Heart left ventricle (tissue), 16 donors: ENCODE measurements at regions of chr19 and their contacts with region 1.

Region 1: GRCh38 chr19:49766007-49766937 is 529 bp upstream of the AP2A1 start:
- DNase-seq: peak; percentile 99 to 100 (median 100)
- ATAC-seq: peak; percentile 90 to 96 (median 95)
- H3K4me3 ChIP-seq: peak overlapping the region in 11 of 12 donors; percentile 46 to 97 (median 84)
- H3K27ac ChIP-seq: peak overlapping the region; percentile 90 to 99 (median 94)
- H3K4me1 ChIP-seq: peaks cover 0 to 39% (median 29%) of the 10 kb centered on the region in 12 donors
- H3K27me3 ChIP-seq: no peaks in the 10 kb centered on the region
- CTCF ChIP-seq: peak in 2 of 12 donors; percentile 14 to 18
- POLR2A ChIP-seq: peak in 1 of 2 donors; percentile 92

Region 2: DNA sequence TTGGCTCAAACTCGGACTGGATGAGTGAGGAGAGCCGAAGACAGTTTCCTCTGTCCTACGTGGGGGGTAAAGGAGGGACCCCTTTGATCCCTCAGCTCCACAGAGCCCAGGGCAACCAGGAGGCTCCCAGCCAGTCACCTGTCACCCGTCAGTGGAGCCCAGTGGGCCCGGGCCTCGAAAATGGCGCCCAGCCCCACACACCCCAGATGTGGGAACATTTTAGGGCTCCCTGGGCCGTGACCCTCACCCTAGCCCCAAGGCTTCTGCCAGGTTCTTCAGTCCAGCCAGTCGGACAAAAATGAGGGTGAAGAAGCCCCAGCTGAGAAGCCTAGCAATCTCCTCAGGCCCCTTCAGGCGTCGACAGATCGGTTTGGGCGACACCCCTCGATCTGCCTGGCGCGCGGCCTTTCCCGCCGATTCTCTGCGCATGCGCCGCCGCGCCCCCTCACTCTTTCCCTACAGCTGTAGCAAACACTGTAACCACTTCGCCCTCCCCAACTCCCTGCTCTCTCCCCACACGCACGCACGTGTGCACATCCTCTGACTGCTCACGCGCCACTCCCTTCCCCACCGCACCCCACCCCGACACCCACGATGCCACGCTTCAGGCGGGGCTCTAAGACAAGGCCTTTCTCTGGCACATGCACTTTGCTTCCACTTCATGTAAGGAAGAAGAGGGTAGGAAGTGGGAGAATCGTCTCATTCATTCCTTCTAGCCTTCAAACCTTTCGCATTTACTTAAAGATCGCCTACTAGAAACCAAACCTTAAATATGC is 441.3 kb before region 1 on chr19 and contains the start of gene SLC6A16:
- intact Hi-C with region 1: no loop called
- DNase-seq: no peak
- ATAC-seq: peak in 2 of 4 donors; percentile 7 to 45
- H3K4me3 ChIP-seq: no peak within 1 kb of the TSS
- H3K27ac ChIP-seq: no peak within 1 kb of the TSS
- H3K4me1 ChIP-seq: peaks cover 0 to 14% (median 0%) of the 10 kb centered on the region in 12 donors
- H3K27me3 ChIP-seq: no peaks in the 10 kb centered on the region
- CTCF ChIP-seq: no peak
- POLR2A ChIP-seq: no peak
- total RNA-seq, gene SLC6A16: 0.27 to 1.3 (median 0.40) TPM

Region 3: GRCh38 chr19:49690656-49691242 is 75.5 kb before region 1 on chr19 and contains the start of gene CPT1C:
- intact Hi-C with region 1: loop called in 2 of 10 experiments (anchors 5 kb)
- DNase-seq: peak; percentile 80 to 86 (median 83)
- ATAC-seq: peak; percentile 54 to 85 (median 75)
- H3K4me3 ChIP-seq: peak within 1 kb of the TSS; percentile 25 to 71 (median 58)
- H3K27ac ChIP-seq: peak within 1 kb of the TSS; percentile 20 to 85 (median 64)
- H3K4me1 ChIP-seq: peaks cover 0 to 50% (median 30%) of the 10 kb centered on the region in 12 donors
- H3K27me3 ChIP-seq: peaks cover 0 to 27% (median 0%) of the 10 kb centered on the region in 9 donors
- CTCF ChIP-seq: no peak
- POLR2A ChIP-seq: peak in 1 of 2 donors; percentile 43
- total RNA-seq, gene CPT1C: 1.00 to 6.0 (median 2.2) TPM

Region 4: DNA sequence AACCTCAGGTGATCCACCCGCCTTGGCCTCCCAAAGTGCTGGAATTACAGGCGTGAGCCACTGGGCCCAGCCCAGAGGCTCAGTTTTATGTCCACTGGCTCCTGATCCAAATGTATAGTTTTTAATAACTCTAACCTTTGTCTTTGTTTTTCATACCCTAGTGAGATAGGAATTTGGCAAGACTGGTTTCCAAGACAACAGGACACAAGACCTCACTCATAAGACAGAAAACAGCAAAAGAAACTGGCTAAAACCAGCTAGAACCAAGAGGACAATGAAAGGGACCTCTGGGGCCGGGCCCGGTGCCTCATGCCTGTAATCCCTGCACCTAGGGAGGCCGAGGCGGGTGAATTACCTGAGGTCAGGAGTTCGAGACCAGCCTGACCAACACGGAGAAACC is 47.8 kb before region 1 on chr19:
- intact Hi-C with region 1: loop called in 3 of 10 experiments (anchors 1 to 5 kb)
- DNase-seq: no peak
- ATAC-seq: no peak
- H3K4me3 ChIP-seq: peak overlapping the region in 1 of 12 donors; percentile 73
- H3K27ac ChIP-seq: no peak overlapping the region
- H3K4me1 ChIP-seq: peaks cover 0 to 13% (median 0%) of the 10 kb centered on the region in 12 donors
- H3K27me3 ChIP-seq: no peaks in the 10 kb centered on the region
- CTCF ChIP-seq: no peak
- POLR2A ChIP-seq: no peak

Region 5: DNA sequence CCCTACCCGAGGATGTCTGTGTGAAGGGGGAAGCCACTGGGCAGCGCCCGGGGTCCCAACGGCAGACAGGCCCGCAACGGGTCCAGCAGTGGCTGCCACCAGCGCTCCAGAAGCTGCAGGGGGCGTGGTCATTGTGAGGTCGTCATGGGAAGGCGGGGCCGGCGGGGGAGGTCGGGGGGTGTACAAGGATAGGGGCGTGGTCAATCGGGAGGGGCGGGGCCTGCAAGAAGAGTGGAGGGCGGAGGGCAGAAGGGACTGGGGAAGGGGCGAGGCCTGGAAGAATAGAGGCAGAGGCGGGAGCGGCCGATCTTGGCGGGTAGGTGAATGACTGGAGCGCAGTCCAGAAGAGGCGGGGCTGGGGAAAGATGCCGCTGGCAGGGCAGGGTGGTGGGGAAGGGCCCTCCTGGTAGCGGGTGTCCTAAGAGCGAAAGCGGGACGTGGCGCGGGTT is 42.5 kb after region 1 on chr19:
- intact Hi-C with region 1: loop called in 8 of 10 experiments (anchors 2 to 5 kb)
- DNase-seq: peak; percentile 94 to 97 (median 95)
- ATAC-seq: peak; percentile 39 to 78 (median 77)
- H3K4me3 ChIP-seq: peak overlapping the region; percentile 60 to 99 (median 74)
- H3K27ac ChIP-seq: peak overlapping the region; percentile 72 to 90 (median 88)
- H3K4me1 ChIP-seq: peaks cover 0 to 37% (median 18%) of the 10 kb centered on the region in 12 donors
- H3K27me3 ChIP-seq: no peaks in the 10 kb centered on the region
- CTCF ChIP-seq: no peak
- POLR2A ChIP-seq: peak in 1 of 2 donors; percentile 41

Region 6: GRCh38 chr19:49869441-49870176 is 103.3 kb after region 1 on chr19:
- intact Hi-C with region 1: loop called in 2 of 10 experiments (anchors 5 kb)
- DNase-seq: peak; percentile 97
- ATAC-seq: peak; percentile 80 to 91 (median 86)
- H3K4me3 ChIP-seq: peak overlapping the region; percentile 36 to 79 (median 60)
- H3K27ac ChIP-seq: peak overlapping the region; percentile 83 to 98 (median 94)
- H3K4me1 ChIP-seq: peaks cover 9 to 58% (median 43%) of the 10 kb centered on the region in 12 donors
- H3K27me3 ChIP-seq: no peaks in the 10 kb centered on the region
- CTCF ChIP-seq: peak in 2 of 12 donors; percentile 12 to 33
- POLR2A ChIP-seq: peak; percentile 77 to 91

Region 7: GRCh38 chr19:49911381-49912145 is 145.3 kb after region 1 on chr19:
- intact Hi-C with region 1: no loop called
- DNase-seq: peak in 1 of 5 donors; percentile 39
- ATAC-seq: peak in 3 of 4 donors; percentile 24 to 62 (median 47)
- H3K4me3 ChIP-seq: no peak overlapping the region
- H3K27ac ChIP-seq: peak overlapping the region in 3 of 12 donors; percentile 29 to 90 (median 38)
- H3K4me1 ChIP-seq: peaks cover 0 to 37% (median 4%) of the 10 kb centered on the region in 12 donors
- H3K27me3 ChIP-seq: no peaks in the 10 kb centered on the region
- CTCF ChIP-seq: no peak
- POLR2A ChIP-seq: no peak